AG04450 (cell line): ENCODE measurements at regions of chr11 and their contacts with region 1.

Region 1: DNA sequence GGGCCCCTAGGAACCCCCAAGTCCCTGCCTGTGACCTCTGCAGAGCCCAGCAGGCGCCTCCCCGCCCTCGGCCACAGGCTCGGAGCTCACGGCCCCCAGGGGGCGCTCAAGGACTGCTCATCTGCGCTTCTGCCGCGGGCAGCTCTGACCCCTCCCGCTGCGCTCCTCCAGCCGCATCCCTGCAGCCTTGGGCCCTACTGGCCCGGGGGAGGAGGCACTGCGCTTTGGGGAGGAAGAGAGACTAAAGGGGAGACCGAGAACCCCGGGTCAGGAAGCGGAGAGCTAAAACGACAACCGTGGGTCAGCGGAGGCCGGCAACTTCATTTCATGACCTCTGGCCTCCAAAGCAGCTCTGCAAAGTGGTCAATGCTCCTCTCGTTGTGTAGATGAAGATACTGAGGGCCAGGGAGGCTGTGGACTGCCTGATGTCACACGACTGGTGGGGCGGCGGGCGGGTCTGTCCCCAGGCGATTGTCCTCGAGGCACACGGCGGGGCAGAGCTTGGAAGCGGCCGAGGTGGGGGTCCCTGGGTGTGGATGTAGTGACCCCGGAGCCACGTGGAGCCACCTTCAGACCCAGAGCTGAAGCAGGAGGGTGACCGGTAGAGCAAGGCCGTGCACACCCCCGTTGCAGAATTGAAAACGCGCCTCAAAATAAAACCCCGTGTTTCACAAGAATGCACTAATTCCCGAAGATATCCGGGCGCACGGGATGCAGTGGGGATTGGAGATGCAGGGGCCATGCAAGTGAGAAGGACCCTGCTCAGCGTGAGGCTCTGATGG is 2.7 kb upstream of the KRTAP5-6 start:
- DNase-seq: peak; percentile 45
- H3K4me3 ChIP-seq: no peak overlapping the region
- H3K27ac ChIP-seq: no peak overlapping the region
- H3K27me3 ChIP-seq: peaks cover 24% of the 10 kb centered on the region
- CTCF ChIP-seq: peak; percentile 87

Region 2: GRCh38 chr11:1674173-1675131 is 19.8 kb before region 1 on chr11:
- CTCF ChIA-PET with region 1: interaction called, 54 read pairs
- POLR2A ChIA-PET with region 1: interaction called, 3 read pairs
- DNase-seq: no peak
- H3K4me3 ChIP-seq: no peak overlapping the region
- H3K27ac ChIP-seq: no peak overlapping the region
- H3K27me3 ChIP-seq: peaks cover 34% of the 10 kb centered on the region
- CTCF ChIP-seq: no peak

Region 3: GRCh38 chr11:1706634-1707400 is 12.6 kb after region 1 on chr11:
- CTCF ChIA-PET with region 1: interaction called, 24 read pairs
- POLR2A ChIA-PET with region 1: no interaction called
- DNase-seq: no peak
- H3K4me3 ChIP-seq: no peak overlapping the region
- H3K27ac ChIP-seq: no peak overlapping the region
- H3K27me3 ChIP-seq: peaks cover 43% of the 10 kb centered on the region
- CTCF ChIP-seq: 0 out of 2 replicates have a peak, but pooled peaks have one; percentile 8

Region 4: DNA sequence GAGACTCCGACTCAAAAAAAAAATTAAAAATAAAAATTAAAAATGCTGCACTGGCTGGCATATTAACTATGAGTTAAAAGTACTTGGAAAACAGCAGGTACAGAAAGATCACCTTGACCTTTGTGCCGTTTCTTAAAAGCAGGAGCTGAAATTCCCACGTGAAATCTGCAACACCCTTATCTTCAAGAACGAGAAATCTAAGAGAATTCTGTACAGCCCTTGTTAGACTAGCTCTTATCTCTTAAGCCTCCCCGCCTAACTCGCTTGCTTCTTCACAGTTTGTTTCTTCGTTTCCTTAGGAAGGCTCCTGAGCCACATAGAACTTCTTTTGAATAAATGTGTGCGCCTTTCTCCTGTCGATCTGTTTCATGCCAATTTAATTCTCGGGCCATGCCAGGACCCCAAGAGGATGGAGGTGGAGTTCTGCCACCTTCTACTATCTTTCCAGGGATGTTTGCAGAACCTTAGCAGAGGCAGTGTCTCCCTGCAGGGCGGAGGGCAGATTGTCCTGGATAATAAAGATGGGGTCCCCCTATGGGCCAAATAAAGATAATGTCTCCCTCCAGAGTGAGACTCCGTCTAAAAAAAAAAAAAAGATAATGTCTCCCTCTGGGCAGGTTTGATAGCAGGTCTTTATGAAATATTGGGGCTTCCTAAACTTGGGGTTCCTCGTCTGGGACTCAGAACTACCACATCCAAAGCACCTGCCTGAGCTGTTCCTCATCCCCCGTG is 113.2 kb after region 1 on chr11:
- CTCF ChIA-PET with region 1: interaction called, 21 read pairs
- POLR2A ChIA-PET with region 1: no interaction called
- DNase-seq: no peak
- H3K4me3 ChIP-seq: no peak overlapping the region
- H3K27ac ChIP-seq: no peak overlapping the region
- H3K27me3 ChIP-seq: peaks cover 21% of the 10 kb centered on the region
- CTCF ChIP-seq: no peak

Region 5: GRCh38 chr11:1832211-1832919 is 138.1 kb after region 1 on chr11:
- CTCF ChIA-PET with region 1: interaction called, 300 read pairs
- POLR2A ChIA-PET with region 1: interaction called, 8 read pairs
- DNase-seq: no peak
- H3K4me3 ChIP-seq: no peak overlapping the region
- H3K27ac ChIP-seq: no peak overlapping the region
- H3K27me3 ChIP-seq: peaks cover 11% of the 10 kb centered on the region
- CTCF ChIP-seq: peak; percentile 96

Region 6: GRCh38 chr11:1876361-1877063 is 182.3 kb after region 1 on chr11:
- CTCF ChIA-PET with region 1: interaction called, 17 read pairs
- POLR2A ChIA-PET with region 1: no interaction called
- DNase-seq: no peak
- H3K4me3 ChIP-seq: no peak overlapping the region
- H3K27ac ChIP-seq: no peak overlapping the region
- H3K27me3 ChIP-seq: peaks cover 3% of the 10 kb centered on the region
- CTCF ChIP-seq: peak; percentile 55

Region 7: DNA sequence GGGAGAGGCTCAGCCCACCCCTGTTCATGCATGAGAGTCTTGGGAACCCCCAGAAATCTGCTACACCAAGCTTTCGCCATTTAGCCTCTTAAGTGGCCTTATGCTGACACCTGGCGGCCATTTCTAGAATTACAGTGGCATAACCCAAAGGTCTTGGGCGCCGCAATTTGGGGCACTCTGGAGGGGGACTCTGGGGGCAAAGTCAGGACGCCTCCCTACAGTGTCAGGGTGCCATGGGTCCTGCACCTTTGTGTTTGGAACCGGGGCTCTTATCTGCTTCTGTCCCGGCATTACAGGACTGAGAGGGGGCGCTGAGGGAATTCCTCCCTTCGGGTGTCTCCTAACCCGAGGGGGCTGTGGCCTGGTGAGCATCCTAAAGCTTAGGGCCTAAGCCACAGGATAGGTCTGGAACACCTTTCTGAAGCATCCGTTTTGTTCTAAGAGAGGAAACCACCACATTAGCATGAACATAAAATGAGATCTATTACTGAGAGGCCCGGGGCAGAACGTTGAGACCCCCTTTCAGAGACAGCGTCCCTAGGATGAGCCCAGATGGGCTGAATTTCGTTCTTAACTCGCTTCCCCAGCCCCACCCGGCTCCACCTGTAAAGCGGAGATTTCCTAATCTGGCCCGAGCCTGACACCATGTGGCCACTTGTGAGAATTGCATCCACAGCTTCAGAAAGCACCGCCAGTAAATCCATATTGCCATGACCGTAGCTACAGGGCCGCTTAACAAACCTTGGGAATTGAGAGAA is 457.4 kb after region 1 on chr11:
- CTCF ChIA-PET with region 1: interaction called, 53 read pairs
- POLR2A ChIA-PET with region 1: interaction called, 3 read pairs
- DNase-seq: peak; percentile 27
- H3K4me3 ChIP-seq: no peak overlapping the region
- H3K27ac ChIP-seq: no peak overlapping the region
- H3K27me3 ChIP-seq: peaks cover 49% of the 10 kb centered on the region
- CTCF ChIP-seq: peak; percentile 78